ENCODE measurements at regions of chr9 and their contacts with region 1.

Region 1: DNA sequence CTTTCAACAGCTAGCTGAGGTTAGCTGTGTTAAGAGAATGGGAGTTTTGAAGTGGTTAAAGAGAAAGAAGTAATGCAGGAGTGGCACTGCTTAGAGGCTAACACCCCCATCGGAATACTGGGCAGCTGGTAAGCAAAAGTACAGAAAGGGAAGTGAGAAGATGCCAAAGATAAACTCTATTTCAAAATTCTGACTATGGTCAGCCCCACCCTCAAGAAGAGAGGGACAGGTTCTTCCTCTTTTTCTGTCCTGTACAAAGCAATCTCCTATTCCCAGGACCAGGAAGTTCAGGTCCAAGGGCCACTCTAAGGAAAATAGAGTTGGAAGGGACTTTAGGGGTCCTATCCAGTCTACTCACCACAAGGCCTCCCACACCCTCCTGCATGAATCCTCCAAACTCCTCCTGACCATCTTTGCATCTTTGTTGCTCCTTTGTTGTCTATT is 45.9 kb upstream of the JAK2 start:
- DNase-seq: peak; percentile 33
- H3K4me3 Mint-ChIP-seq: peak overlapping the region; percentile 5
- H3K27ac Mint-ChIP-seq: peak overlapping the region; percentile 74
- H3K4me1 Mint-ChIP-seq: peaks cover 75% of the 10 kb centered on the region
- H3K27me3 Mint-ChIP-seq: no peaks in the 10 kb centered on the region

Region 2: GRCh38 chr9:4866239-4866969 is 72.7 kb before region 1 on chr9:
- intact Hi-C with region 1: loop called (anchors 1 kb)
- DNase-seq: no peak
- H3K4me3 Mint-ChIP-seq: peak overlapping the region; percentile 45
- H3K27ac Mint-ChIP-seq: peak overlapping the region; percentile 90
- H3K4me1 Mint-ChIP-seq: peaks cover 36% of the 10 kb centered on the region
- H3K27me3 Mint-ChIP-seq: no peaks in the 10 kb centered on the region

Region 3: GRCh38 chr9:4923580-4924544 is 15.3 kb before region 1 on chr9:
- intact Hi-C with region 1: loop called (anchors 1 kb)
- DNase-seq: peak; percentile 19
- H3K4me3 Mint-ChIP-seq: no peak overlapping the region
- H3K27ac Mint-ChIP-seq: no peak overlapping the region
- H3K4me1 Mint-ChIP-seq: peaks cover 33% of the 10 kb centered on the region
- H3K27me3 Mint-ChIP-seq: no peaks in the 10 kb centered on the region

Region 4: GRCh38 chr9:4970970-4971641 is 32.0 kb after region 1 on chr9:
- intact Hi-C with region 1: loop called (anchors 1 kb)
- DNase-seq: peak; percentile 62
- H3K4me3 Mint-ChIP-seq: no peak overlapping the region
- H3K27ac Mint-ChIP-seq: no peak overlapping the region
- H3K4me1 Mint-ChIP-seq: peaks cover 14% of the 10 kb centered on the region
- H3K27me3 Mint-ChIP-seq: no peaks in the 10 kb centered on the region

Measured in activated T-helper 1 cell treated with anti-CD3 and anti-CD28 coated beads, Interleukin-12 subunit alpha, Interleukin-12 subunit beta, Interleukin-2, Interleukin-4 antibody, amounts not matched to agents 30 ng/mL and 10 ng/mL and 1 ng/mL, durations not matched to agents 14 hours and 24 hours and 36 hours (primary cell).